Mucosa of descending colon (tissue), 3 donors: ENCODE measurements at regions of chr14 and their contacts with region 1.

Region 1: GRCh38 chr14:54420013-54420809 is 21.0 kb downstream of the CNIH1 start:
- DNase-seq: peak in 1 of 3 donors; percentile 66
- ATAC-seq: peak; percentile 66
- H3K4me3 ChIP-seq: no peak overlapping the region
- H3K4me1 ChIP-seq: peaks cover 11% of the 10 kb centered on the region
- CTCF ChIP-seq: peak; percentile 26

Region 2: DNA sequence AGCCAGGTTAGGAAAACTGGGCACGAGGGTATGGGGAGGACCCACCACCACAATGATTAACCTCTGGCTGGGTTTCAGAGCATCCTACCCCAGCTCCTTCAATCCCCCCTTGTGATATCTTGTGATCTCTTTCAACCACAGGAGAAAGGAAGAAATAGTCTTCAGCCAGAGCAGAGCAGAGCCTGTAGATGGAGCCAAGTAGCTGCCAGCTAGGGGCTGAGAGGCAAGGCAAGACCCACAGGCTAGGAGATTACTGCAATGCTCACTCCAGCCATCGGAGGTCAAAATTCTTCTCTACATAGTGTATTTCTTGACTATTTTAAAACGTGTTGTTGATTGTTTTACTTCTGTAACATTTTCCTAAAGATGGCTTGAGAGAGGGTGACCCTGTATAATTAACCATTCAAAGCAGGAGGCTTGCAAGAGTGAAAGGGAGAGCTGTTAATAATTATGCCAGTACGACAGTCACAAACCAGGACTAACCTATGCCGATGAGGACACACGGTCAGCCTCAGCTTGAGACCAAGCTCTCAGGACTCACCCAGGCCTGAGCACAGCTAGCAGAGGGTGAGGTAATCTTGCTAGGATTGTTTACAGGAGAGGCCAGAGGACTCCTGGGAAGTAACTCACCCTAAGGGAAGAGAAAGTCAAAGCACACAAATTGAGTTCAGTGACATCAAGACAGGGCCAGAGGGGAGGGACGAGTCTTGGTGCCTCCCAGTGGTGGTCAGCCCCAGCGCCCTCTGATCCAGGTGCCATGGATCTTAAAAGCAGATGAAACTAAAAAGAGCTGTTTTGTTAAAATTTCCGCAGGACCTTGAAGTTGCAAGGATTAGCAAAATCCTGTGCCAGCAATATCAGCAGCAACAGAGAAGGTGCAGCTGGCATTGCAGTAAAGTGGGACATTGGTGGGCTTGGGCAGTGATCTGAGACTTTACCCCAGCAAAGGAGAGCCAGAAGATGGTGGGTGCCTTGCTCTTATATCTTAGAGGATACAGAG is 53.2 kb before region 1 on chr14:
- intact Hi-C with region 1: loop called in 1 of 2 experiments (anchors 2 kb)
- DNase-seq: peak in 2 of 3 donors; percentile 35 to 54
- ATAC-seq: peak; percentile 90
- H3K4me3 ChIP-seq: no peak overlapping the region
- H3K4me1 ChIP-seq: no peaks in the 10 kb centered on the region
- CTCF ChIP-seq: peak; percentile 12

Region 3: GRCh38 chr14:54488646-54489317 is 68.6 kb after region 1 on chr14 and contains the start of gene GMFB:
- intact Hi-C with region 1: no loop called
- DNase-seq: peak; percentile 94 to 95 (median 95)
- ATAC-seq: peak; percentile 97
- H3K4me3 ChIP-seq: peak within 1 kb of the TSS; percentile 95
- H3K4me1 ChIP-seq: peaks cover 43% of the 10 kb centered on the region
- CTCF ChIP-seq: no peak
- total RNA-seq, gene GMFB: 55.7 to 74.4 (median 57.5) TPM

Region 4: GRCh38 chr14:54555651-54556050 is 135.4 kb after region 1 on chr14:
- intact Hi-C with region 1: no loop called
- DNase-seq: no peak
- ATAC-seq: no peak
- H3K4me3 ChIP-seq: no peak overlapping the region
- H3K4me1 ChIP-seq: no peaks in the 10 kb centered on the region
- CTCF ChIP-seq: no peak